ENCODE measurements at regions of chr3 and their contacts with region 1.

Region 1: GRCh38 chr3:118884748-118885206 is 149.9 kb downstream of the IGSF11 start:
- DNase-seq: peak; percentile 85
- ATAC-seq: peak; percentile 90

Region 2: GRCh38 chr3:117892431-117892841 is 992.3 kb before region 1 on chr3:
- intact Hi-C with region 1: no loop called
- DNase-seq: no peak
- ATAC-seq: peak; percentile 30

Region 3: GRCh38 chr3:119034256-119035013 is 149.7 kb after region 1 on chr3 and contains the start of gene IGSF11:
- intact Hi-C with region 1: loop called (anchors 5 kb)
- DNase-seq: peak; percentile 81
- ATAC-seq: peak; percentile 98
- total RNA-seq, gene IGSF11: 1.6 TPM

Region 4: GRCh38 chr3:119099785-119100184 is 215.0 kb after region 1 on chr3:
- intact Hi-C with region 1: loop called (anchors 2 kb)
- DNase-seq: no peak
- ATAC-seq: no peak

Measured in left ventricle myocardium superior (tissue), 1 donor.